Sigmoid colon (tissue), 7 donors: ENCODE measurements at regions of chr3 and their contacts with region 1.

Region 1: DNA sequence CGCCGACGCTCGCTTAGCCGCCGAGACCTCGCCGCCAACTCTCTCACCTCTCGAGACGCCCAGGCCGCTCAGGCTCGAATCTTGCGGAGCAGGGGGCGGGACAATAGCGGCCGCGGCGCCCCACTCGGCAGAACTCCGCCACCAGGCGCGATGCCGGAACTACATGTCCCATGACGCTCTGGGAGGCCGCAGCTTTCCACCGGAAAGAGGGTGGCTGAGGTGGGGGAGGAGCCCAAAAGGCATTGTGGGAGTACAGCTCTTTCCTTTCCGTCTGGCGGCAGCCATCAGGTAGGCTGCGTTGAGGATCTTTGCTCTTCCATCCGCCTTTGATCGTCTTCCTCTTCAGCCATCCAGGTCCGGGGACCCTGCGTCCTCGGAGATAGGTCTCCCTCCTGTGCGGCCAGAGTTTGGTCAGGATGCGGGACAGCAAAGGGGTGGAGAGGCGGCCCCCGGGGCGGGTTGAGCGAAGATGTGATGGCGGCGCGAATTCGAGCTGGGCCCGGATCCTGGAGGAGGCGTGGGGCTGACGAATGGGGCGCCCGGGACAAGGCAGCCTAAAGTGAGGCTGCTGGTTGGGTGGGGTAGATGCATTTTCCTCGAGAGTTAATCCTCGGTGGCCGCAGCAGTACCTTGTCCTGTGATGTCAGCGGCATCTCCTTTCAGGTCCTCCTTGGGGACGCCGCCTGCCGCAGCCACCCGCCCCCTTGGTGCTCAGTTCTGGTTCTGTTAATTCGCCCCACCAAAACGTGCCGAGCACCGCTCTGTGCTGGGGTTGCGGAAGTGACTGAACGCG is at the starts of genes NKIRAS1 and RPL15:
- DNase-seq: peak; percentile 99
- H3K4me3 ChIP-seq: peak within 1 kb of the TSS; percentile 76 to 90 (median 86)
- H3K27ac ChIP-seq: peak within 1 kb of the TSS; percentile 92 to 96 (median 96)
- H3K4me1 ChIP-seq: peaks cover 0 to 53% (median 36%) of the 10 kb centered on the region in 4 donors
- H3K27me3 ChIP-seq: no peaks in the 10 kb centered on the region
- CTCF ChIP-seq: peak; percentile 56 to 80 (median 72)
- EP300 ChIP-seq: peak in 1 of 4 donors; percentile 56
- POLR2A ChIP-seq: peak; percentile 98 to 99
- total RNA-seq, gene NKIRAS1: 21.6 to 29.3 (median 26.8) TPM
- total RNA-seq, gene RPL15: 1,530 to 5,073 (median 3,085) TPM

Region 2: GRCh38 chr3:23052620-23053019 is 864.5 kb before region 1 on chr3:
- intact Hi-C with region 1: no loop called
- DNase-seq: no peak
- H3K4me3 ChIP-seq: no peak overlapping the region
- H3K27ac ChIP-seq: no peak overlapping the region
- H3K4me1 ChIP-seq: peaks cover 0 to 10% (median 2%) of the 10 kb centered on the region in 4 donors
- H3K27me3 ChIP-seq: no peaks in the 10 kb centered on the region
- CTCF ChIP-seq: no peak
- EP300 ChIP-seq: no peak
- POLR2A ChIP-seq: no peak

Region 3: GRCh38 chr3:23945903-23946751 is 29.0 kb after region 1 on chr3:
- intact Hi-C with region 1: loop called (anchors 1 kb)
- DNase-seq: peak; percentile 99
- H3K4me3 ChIP-seq: peak overlapping the region; percentile 52 to 94 (median 92)
- H3K27ac ChIP-seq: peak overlapping the region; percentile 93 to 100 (median 99)
- H3K4me1 ChIP-seq: peaks cover 0 to 54% (median 48%) of the 10 kb centered on the region in 4 donors
- H3K27me3 ChIP-seq: no peaks in the 10 kb centered on the region
- CTCF ChIP-seq: no peak
- EP300 ChIP-seq: peak in 1 of 4 donors; percentile 56
- POLR2A ChIP-seq: peak in 1 of 2 donors; percentile 59

Region 4: DNA sequence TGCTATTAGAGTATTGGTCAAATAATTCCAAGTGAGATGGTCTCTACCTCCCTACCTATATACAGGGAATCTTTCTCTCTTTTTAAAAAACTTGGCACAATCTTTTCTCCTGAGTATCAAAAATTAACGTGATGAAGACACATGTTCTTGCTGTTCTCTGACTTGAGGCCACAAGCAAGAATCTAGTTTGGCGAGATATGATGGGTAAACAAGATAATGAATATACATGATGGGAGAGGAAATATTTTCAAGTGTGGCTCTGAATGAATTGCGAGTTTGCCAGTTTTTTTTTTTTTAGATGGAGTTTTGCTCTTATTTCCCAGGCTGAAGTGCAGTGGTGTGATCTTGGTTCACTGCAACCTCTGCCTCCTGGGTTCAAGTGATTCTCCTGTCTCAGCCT is 39.6 kb after region 1 on chr3:
- intact Hi-C with region 1: no loop called
- DNase-seq: no peak
- H3K4me3 ChIP-seq: no peak overlapping the region
- H3K27ac ChIP-seq: no peak overlapping the region
- H3K4me1 ChIP-seq: peaks cover 0 to 62% (median 47%) of the 10 kb centered on the region in 4 donors
- H3K27me3 ChIP-seq: no peaks in the 10 kb centered on the region
- CTCF ChIP-seq: no peak
- EP300 ChIP-seq: no peak
- POLR2A ChIP-seq: no peak